H1 (cell line): ENCODE measurements at regions of chr9 and their contacts with region 1.

Region 1: DNA sequence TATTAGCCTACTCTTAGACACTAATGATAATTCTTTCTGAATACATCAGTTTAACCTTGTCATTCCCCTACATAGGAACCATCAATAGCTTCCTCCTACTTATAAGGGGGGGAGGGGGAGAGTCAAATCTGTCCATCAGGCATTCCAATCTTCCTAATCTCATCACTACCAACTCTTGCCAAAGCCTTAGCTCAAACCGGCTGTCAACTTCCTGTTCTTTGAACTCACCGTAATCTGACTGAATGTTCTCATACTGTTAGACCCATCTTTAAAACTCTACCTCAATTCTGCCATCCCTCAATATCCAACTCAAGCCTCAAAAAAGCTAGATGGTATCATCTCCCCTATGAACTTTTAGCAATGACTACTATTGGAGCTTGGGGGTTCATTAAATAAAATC is 41.9 kb upstream of the RNF38 start:
- DNase-seq: no peak
- H3K4me3 ChIP-seq: no peak overlapping the region
- H3K27ac ChIP-seq: no peak overlapping the region
- H3K4me1 ChIP-seq: peaks cover 5 to 13% (median 6%) of the 10 kb centered on the region in 4 experiments
- H3K27me3 ChIP-seq: no peaks in the 10 kb centered on the region
- CTCF ChIP-seq: no peak
- EP300 ChIP-seq: no peak
- POLR2A ChIP-seq: no peak
- RAD21 ChIP-seq: no peak

Region 2: GRCh38 chr9:36284226-36284625 is 157.7 kb before region 1 on chr9:
- CTCF ChIA-PET with region 1: no interaction called
- POLR2A ChIA-PET with region 1: no interaction called
- DNase-seq: no peak
- H3K4me3 ChIP-seq: no peak overlapping the region
- H3K27ac ChIP-seq: no peak overlapping the region
- H3K4me1 ChIP-seq: no peaks in the 10 kb centered on the region
- H3K27me3 ChIP-seq: no peaks in the 10 kb centered on the region
- CTCF ChIP-seq: no peak
- EP300 ChIP-seq: no peak
- POLR2A ChIP-seq: no peak
- RAD21 ChIP-seq: no peak

Region 3: GRCh38 chr9:36423206-36423605 is 18.8 kb before region 1 on chr9:
- CTCF ChIA-PET with region 1: interaction called, 11 read pairs
- POLR2A ChIA-PET with region 1: interaction called, 4 read pairs
- DNase-seq: no peak
- H3K4me3 ChIP-seq: no peak overlapping the region
- H3K27ac ChIP-seq: no peak overlapping the region
- H3K4me1 ChIP-seq: no peaks in the 10 kb centered on the region
- H3K27me3 ChIP-seq: no peaks in the 10 kb centered on the region
- CTCF ChIP-seq: no peak
- EP300 ChIP-seq: no peak
- POLR2A ChIP-seq: no peak
- RAD21 ChIP-seq: no peak

Region 4: DNA sequence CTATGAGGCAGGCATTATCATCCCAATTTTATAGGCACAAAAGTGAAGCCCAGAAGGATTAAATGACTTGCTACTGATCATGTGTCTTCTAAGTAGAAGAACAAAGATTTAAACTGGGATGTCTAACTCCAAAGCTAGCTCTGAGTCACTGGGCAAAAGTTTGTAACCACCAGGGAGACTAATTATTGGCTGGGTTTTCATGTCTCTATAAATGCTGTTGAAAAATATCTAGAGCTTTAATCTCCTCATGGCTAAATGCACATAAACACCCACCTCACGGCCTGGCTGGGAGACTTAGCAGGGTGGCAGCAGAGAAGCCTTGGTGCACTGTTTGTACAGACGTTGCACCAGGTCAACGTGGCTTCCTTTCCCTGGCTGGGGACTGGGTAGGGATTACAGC is 275.3 kb after region 1 on chr9:
- CTCF ChIA-PET with region 1: no interaction called
- POLR2A ChIA-PET with region 1: no interaction called
- DNase-seq: no peak
- H3K4me3 ChIP-seq: no peak overlapping the region
- H3K27ac ChIP-seq: no peak overlapping the region
- H3K4me1 ChIP-seq: no peaks in the 10 kb centered on the region
- H3K27me3 ChIP-seq: no peaks in the 10 kb centered on the region
- CTCF ChIP-seq: no peak
- EP300 ChIP-seq: no peak
- POLR2A ChIP-seq: no peak
- RAD21 ChIP-seq: no peak